CD8-positive, alpha-beta T cell (primary cell): ENCODE measurements at regions of chr16 and their contacts with region 1.

Region 1: DNA sequence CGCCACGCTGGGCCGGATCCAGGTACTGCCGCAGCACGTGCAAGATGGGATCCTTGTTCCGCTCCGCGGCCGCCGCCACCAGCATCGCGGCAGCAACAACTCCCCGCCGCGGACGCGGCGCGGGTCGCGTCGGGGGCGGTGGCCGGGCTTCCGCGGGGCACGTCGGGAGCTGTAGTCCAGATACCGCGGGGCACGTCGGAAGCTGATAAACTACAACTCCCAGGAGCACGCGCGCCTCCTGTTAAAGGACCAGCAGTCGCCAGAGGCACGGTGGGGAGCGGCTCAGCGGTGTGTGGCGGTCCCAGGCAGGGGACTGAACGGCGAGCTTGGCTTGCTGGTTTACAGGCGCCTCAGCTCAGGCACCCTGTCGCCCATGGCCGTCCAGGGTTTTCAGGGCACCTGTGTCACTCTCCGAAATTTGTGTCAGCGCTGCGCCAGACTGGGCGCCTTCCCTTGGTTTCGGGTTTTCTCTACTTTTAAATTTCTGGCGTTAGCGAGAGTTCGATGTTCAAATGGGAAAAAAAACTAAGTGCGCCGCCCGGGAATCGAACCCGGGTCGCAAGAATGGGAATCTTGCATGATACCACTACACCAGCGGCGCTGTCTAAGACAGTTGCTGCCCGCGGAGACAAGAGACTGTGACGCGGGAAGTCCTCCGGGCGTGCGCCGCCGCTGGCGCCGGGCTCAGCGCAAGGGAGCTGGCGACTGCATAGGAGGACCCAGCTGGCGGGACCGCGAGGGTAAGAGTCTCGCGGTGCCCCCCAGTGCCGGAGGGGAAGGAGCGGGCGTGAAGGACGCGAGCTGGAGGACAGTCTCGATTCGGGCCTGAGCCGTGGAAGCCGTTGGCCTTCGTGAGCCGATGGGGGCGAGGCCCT is at the start of gene METTL26:
- DNase-seq: peak; percentile 84 to 97 (median 94)
- ATAC-seq: peak; percentile 81
- H3K4me3 ChIP-seq: peak within 1 kb of the TSS; percentile 77 to 97
- H3K4me3 Mint-ChIP-seq: peak within 1 kb of the TSS; percentile 98
- H3K27ac ChIP-seq: peak within 1 kb of the TSS; percentile 56 to 91
- H3K27ac Mint-ChIP-seq: peak within 1 kb of the TSS; percentile 96
- H3K4me1 ChIP-seq: peaks cover 22% of the 10 kb centered on the region
- H3K4me1 Mint-ChIP-seq: peaks cover 10% of the 10 kb centered on the region
- H3K27me3 ChIP-seq: no peaks in the 10 kb centered on the region
- H3K27me3 Mint-ChIP-seq: no peaks in the 10 kb centered on the region
- CTCF ChIP-seq: no peak
- total RNA-seq, gene METTL26: 37.4 to 43.1 TPM

Region 2: GRCh38 chr16:381789-382717 is 254.4 kb before region 1 on chr16 and contains the start of gene PGAP6:
- CTCF ChIA-PET with region 1: no interaction called
- POLR2A ChIA-PET with region 1: no interaction called
- intact Hi-C with region 1: loop called in 1 of 2 experiments (anchors 10 kb)
- DNase-seq: peak in 8 of 9 experiments; percentile 50 to 85 (median 70)
- ATAC-seq: peak; percentile 57
- H3K4me3 ChIP-seq: peak within 1 kb of the TSS; percentile 63 to 74
- H3K4me3 Mint-ChIP-seq: peak within 1 kb of the TSS; percentile 93
- H3K27ac ChIP-seq: peak within 1 kb of the TSS in 1 of 2 experiments; percentile 68
- H3K27ac Mint-ChIP-seq: peak within 1 kb of the TSS; percentile 86
- H3K4me1 ChIP-seq: peaks cover 34% of the 10 kb centered on the region
- H3K4me1 Mint-ChIP-seq: peaks cover 29% of the 10 kb centered on the region
- H3K27me3 ChIP-seq: no peaks in the 10 kb centered on the region
- H3K27me3 Mint-ChIP-seq: no peaks in the 10 kb centered on the region
- CTCF ChIP-seq: no peak
- total RNA-seq, gene PGAP6: 57.9 to 60.8 TPM

Region 3: DNA sequence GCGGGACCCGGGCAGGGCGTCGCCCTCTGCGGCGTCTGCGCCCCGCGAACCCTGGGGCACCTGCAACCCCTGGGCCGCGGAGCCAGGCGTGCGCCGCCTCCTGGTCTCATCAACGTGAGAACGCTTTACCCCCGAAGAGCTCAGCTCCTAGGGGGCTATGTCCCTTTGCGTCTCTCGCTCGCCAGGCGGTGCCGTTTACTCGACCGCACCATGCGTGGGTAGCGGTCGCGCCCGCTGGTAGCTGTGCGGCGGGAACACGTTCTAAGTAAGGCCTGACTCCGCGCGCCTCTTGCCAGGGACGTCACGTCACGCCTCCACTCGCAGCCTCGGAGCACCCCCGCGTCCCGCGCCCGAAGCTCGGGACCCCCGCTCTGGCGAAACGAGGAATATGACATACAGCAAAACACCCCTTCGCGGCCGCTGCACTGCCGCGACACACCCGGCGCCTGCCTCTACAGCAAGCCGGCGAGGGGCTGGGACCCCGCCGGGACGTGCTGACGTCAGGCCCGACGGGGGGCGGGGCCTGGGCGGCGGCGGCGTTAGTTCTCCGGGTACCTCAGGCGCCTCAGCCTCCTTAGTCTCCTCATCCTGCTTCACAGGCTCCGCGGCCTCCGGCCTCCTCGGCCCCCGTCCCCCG is 211.2 kb before region 1 on chr16 and contains the start of gene RAB11FIP3:
- CTCF ChIA-PET with region 1: no interaction called
- POLR2A ChIA-PET with region 1: no interaction called
- intact Hi-C with region 1: loop called in 1 of 2 experiments (anchors 1 kb)
- DNase-seq: peak; percentile 66 to 92 (median 83)
- ATAC-seq: peak; percentile 89
- H3K4me3 ChIP-seq: peak within 1 kb of the TSS; percentile 78 to 86
- H3K4me3 Mint-ChIP-seq: peak within 1 kb of the TSS; percentile 90
- H3K27ac ChIP-seq: peak within 1 kb of the TSS; percentile 81 to 93
- H3K27ac Mint-ChIP-seq: peak within 1 kb of the TSS; percentile 96
- H3K4me1 ChIP-seq: peaks cover 21% of the 10 kb centered on the region
- H3K4me1 Mint-ChIP-seq: peaks cover 36% of the 10 kb centered on the region
- H3K27me3 ChIP-seq: peaks cover 0 to 3% of the 10 kb centered on the region in 2 experiments
- H3K27me3 Mint-ChIP-seq: peaks cover 3% of the 10 kb centered on the region
- CTCF ChIP-seq: peak; percentile 40
- total RNA-seq, gene RAB11FIP3: 26.4 to 27.5 TPM

Region 4: GRCh38 chr16:554640-555365 is 81.6 kb before region 1 on chr16:
- CTCF ChIA-PET with region 1: no interaction called
- POLR2A ChIA-PET with region 1: no interaction called
- intact Hi-C with region 1: no loop called
- DNase-seq: peak in 1 of 9 experiments; percentile 36
- ATAC-seq: no peak
- H3K4me3 ChIP-seq: no peak overlapping the region
- H3K4me3 Mint-ChIP-seq: no peak overlapping the region
- H3K27ac ChIP-seq: no peak overlapping the region
- H3K27ac Mint-ChIP-seq: no peak overlapping the region
- H3K4me1 ChIP-seq: no peaks in the 10 kb centered on the region
- H3K4me1 Mint-ChIP-seq: no peaks in the 10 kb centered on the region
- H3K27me3 ChIP-seq: peaks cover 0 to 13% of the 10 kb centered on the region in 2 experiments
- H3K27me3 Mint-ChIP-seq: peaks cover 4% of the 10 kb centered on the region
- CTCF ChIP-seq: no peak

Region 5: GRCh38 chr16:589658-590159 is 46.7 kb before region 1 on chr16 and contains the start of gene RAB40C:
- CTCF ChIA-PET with region 1: no interaction called
- POLR2A ChIA-PET with region 1: interaction called, 5 read pairs
- intact Hi-C with region 1: loop called in 1 of 2 experiments (anchors 1 kb)
- DNase-seq: peak; percentile 98 to 100 (median 99)
- ATAC-seq: peak; percentile 81
- H3K4me3 ChIP-seq: peak within 1 kb of the TSS; percentile 70 to 98
- H3K4me3 Mint-ChIP-seq: peak within 1 kb of the TSS; percentile 95
- H3K27ac ChIP-seq: peak within 1 kb of the TSS; percentile 84 to 93
- H3K27ac Mint-ChIP-seq: peak within 1 kb of the TSS; percentile 98
- H3K4me1 ChIP-seq: peaks cover 29% of the 10 kb centered on the region
- H3K4me1 Mint-ChIP-seq: peaks cover 40% of the 10 kb centered on the region
- H3K27me3 ChIP-seq: no peaks in the 10 kb centered on the region
- H3K27me3 Mint-ChIP-seq: no peaks in the 10 kb centered on the region
- CTCF ChIP-seq: no peak
- total RNA-seq, gene RAB40C: 3.9 to 5.9 TPM

Region 6: DNA sequence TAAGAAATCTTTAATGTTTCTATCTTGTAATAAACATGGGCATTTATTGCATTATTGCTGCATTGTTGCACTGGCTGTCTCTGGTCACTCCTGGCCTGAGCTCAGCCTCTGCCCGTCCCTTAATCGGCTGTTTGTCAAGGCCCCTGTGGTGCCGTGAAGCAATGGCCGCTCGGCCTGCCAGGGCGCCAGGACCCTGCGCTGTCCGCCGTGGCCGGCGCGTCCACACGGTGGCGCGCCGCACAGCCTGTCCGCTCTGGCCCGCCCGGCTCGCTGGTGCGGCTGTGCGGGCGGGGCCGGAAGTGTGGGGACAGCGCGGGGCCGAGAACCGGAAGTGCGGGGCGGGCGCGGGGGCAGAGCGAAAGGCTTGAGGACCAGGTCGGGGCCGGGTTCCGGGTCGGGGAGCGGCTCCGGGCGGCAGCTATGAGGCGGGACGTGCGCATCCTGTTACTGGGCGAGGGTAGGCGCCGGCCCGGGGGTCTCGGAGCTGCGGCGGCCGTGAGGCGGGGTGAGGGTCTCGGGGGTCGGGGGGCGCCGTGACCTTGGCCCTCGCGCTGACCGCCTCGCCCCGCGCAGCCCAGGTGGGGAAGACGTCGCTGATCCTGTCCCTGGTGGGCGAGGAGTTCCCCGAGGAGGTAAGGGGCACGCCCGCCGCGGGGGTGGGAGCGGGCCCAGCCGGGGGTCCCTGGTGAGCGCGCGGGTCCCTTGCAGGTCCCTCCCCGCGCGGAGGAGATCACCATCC is 31.5 kb after region 1 on chr16 and contains the start of gene RHOT2:
- CTCF ChIA-PET with region 1: no interaction called
- POLR2A ChIA-PET with region 1: no interaction called
- intact Hi-C with region 1: loop called (anchors 1 to 2 kb)
- DNase-seq: peak; percentile 83 to 96 (median 92)
- ATAC-seq: peak; percentile 92
- H3K4me3 ChIP-seq: peak within 1 kb of the TSS; percentile 62 to 85
- H3K4me3 Mint-ChIP-seq: peak within 1 kb of the TSS; percentile 79
- H3K27ac ChIP-seq: peak within 1 kb of the TSS; percentile 37 to 68
- H3K27ac Mint-ChIP-seq: peak within 1 kb of the TSS; percentile 84
- H3K4me1 ChIP-seq: peaks cover 22% of the 10 kb centered on the region
- H3K4me1 Mint-ChIP-seq: peaks cover 12% of the 10 kb centered on the region
- H3K27me3 ChIP-seq: no peaks in the 10 kb centered on the region
- H3K27me3 Mint-ChIP-seq: no peaks in the 10 kb centered on the region
- CTCF ChIP-seq: peak; percentile 65
- total RNA-seq, gene RHOT2: 163 to 175 TPM

Region 7: GRCh38 chr16:695355-696089 is 59.1 kb after region 1 on chr16:
- CTCF ChIA-PET with region 1: interaction called, 3 read pairs
- POLR2A ChIA-PET with region 1: interaction called, 12 read pairs
- intact Hi-C with region 1: no loop called
- DNase-seq: peak; percentile 41 to 85 (median 62)
- ATAC-seq: peak; percentile 76
- H3K4me3 ChIP-seq: peak overlapping the region; percentile 58 to 59
- H3K4me3 Mint-ChIP-seq: peak overlapping the region; percentile 77
- H3K27ac ChIP-seq: peak overlapping the region in 1 of 2 experiments; percentile 45
- H3K27ac Mint-ChIP-seq: peak overlapping the region; percentile 66
- H3K4me1 ChIP-seq: peaks cover 42% of the 10 kb centered on the region
- H3K4me1 Mint-ChIP-seq: peaks cover 28% of the 10 kb centered on the region
- H3K27me3 ChIP-seq: peaks cover 0 to 17% of the 10 kb centered on the region in 2 experiments
- H3K27me3 Mint-ChIP-seq: no peaks in the 10 kb centered on the region
- CTCF ChIP-seq: no peak

Region 8: DNA sequence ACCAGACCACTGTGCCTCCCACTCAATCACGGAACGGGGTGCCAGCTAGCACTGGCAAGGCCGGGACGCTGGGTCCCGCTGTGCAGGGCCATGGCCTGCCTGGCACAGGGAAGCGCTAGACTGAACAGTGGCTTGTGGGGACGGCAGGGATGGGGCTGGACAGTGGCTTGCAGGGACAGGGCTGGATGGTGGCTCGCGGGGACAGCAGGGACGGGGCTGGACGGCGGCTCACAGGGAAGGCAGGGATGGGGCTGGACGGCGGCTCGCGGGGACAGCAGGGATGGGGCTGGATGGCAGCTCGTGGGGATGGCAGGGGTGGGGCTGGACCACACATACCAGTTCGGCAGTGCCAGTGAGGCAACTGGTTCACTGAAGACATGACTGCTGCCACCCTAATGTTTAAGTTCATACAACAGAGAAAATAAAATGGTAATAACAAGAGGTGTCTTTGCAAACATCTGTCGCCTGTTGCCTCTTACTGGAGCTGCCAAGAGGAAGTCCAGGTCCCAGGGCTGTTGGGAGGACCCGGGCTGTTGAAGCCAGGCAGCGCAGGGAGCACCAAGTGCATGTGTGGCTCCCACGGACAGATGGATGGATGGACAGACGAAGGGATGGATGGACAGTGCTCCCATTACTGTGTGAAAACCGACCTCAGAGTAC is 301.8 kb after region 1 on chr16:
- CTCF ChIA-PET with region 1: no interaction called
- POLR2A ChIA-PET with region 1: no interaction called
- intact Hi-C with region 1: no loop called
- DNase-seq: no peak
- ATAC-seq: no peak
- H3K4me3 ChIP-seq: no peak overlapping the region
- H3K4me3 Mint-ChIP-seq: no peak overlapping the region
- H3K27ac ChIP-seq: no peak overlapping the region
- H3K27ac Mint-ChIP-seq: no peak overlapping the region
- H3K4me1 ChIP-seq: no peaks in the 10 kb centered on the region
- H3K4me1 Mint-ChIP-seq: peaks cover 7% of the 10 kb centered on the region
- H3K27me3 ChIP-seq: no peaks in the 10 kb centered on the region
- H3K27me3 Mint-ChIP-seq: no peaks in the 10 kb centered on the region
- CTCF ChIP-seq: no peak

Region 9: DNA sequence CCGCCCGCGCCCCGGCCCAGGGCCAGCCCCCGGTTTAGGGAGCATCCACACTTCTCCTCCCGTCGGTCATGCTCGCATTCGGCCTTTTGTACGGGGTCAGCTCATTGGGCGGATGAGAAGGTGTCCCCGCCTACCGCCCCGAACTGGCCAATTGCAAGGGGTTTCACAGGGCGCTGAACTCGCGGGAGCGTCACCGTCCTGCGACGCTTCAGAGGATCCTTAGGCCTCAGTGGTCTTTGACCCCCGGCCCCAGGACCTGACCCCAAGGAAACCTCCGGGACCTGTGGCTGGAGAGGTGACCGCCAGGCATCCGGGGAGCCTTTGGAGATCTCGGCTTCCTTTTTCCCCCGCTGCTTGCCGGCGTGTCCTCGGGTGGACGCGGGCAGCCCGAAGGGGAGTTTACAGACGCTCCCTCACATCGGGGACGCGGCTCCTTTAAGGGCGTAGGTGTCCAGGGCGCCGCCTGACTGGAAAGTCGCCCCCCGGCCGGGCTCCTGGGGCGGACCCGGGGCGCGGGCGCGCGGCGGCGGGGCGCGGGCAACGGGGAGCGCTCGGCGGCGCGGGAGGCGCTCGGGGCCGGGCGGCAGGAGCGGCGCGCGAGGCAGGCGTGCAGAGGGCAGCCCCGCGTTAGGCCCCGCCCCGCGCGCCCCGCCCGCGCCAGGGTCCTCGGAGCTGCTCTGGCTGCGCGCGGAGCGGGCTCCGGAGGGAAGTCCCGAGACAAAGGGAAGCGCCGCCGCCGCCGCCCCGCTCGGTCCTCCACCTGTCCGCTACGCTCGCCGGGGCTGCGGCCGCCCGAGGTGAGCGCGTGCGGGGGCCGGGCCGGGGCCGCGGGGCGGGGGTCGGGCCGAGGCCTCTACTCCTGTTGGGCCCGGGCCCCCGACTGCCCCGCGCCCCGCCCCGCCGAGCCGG is 672.8 kb after region 1 on chr16 and contains the start of gene UBE2I:
- CTCF ChIA-PET with region 1: no interaction called
- POLR2A ChIA-PET with region 1: no interaction called
- intact Hi-C with region 1: loop called in 1 of 2 experiments (anchors 10 kb)
- DNase-seq: peak; percentile 96 to 99 (median 98)
- ATAC-seq: peak; percentile 73
- H3K4me3 ChIP-seq: peak within 1 kb of the TSS; percentile 82 to 95
- H3K4me3 Mint-ChIP-seq: peak within 1 kb of the TSS; percentile 92
- H3K27ac ChIP-seq: peak within 1 kb of the TSS; percentile 100
- H3K27ac Mint-ChIP-seq: peak within 1 kb of the TSS; percentile 100
- H3K4me1 ChIP-seq: peaks cover 50% of the 10 kb centered on the region
- H3K4me1 Mint-ChIP-seq: peaks cover 41% of the 10 kb centered on the region
- H3K27me3 ChIP-seq: no peaks in the 10 kb centered on the region
- H3K27me3 Mint-ChIP-seq: no peaks in the 10 kb centered on the region
- CTCF ChIP-seq: no peak
- total RNA-seq, gene UBE2I: 285 to 294 TPM